CD4-positive, alpha-beta memory T cell (primary cell): ENCODE measurements at regions of chr1 and their contacts with region 1.

Region 1: GRCh38 chr1:39672551-39672947 is 642 bp upstream of the NT5C1A start:
- DNase-seq: peak in 2 of 5 donors; percentile 31 to 36
- H3K4me3 ChIP-seq: no peak overlapping the region
- H3K4me3 Mint-ChIP-seq: peak overlapping the region; percentile 57 to 78 (median 69)
- H3K27ac ChIP-seq: no peak overlapping the region
- H3K27ac Mint-ChIP-seq: peak overlapping the region in 1 of 7 donors; percentile 11
- H3K4me1 ChIP-seq: peaks cover 18% of the 10 kb centered on the region
- H3K4me1 Mint-ChIP-seq: peaks cover 0 to 7% (median 5%) of the 10 kb centered on the region in 4 donors
- H3K27me3 ChIP-seq: peaks cover 17% of the 10 kb centered on the region
- H3K27me3 Mint-ChIP-seq: peaks cover 14 to 16% of the 10 kb centered on the region in 2 donors

Region 2: GRCh38 chr1:39653546-39654031 is 19.0 kb before region 1 on chr1:
- CTCF ChIA-PET with region 1: interaction called, 103 read pairs
- POLR2A ChIA-PET with region 1: interaction called, 3 read pairs
- intact Hi-C with region 1: no loop called
- DNase-seq: peak; percentile 65 to 74 (median 71)
- H3K4me3 ChIP-seq: no peak overlapping the region
- H3K4me3 Mint-ChIP-seq: peak overlapping the region in 1 of 8 donors; percentile 3
- H3K27ac ChIP-seq: no peak overlapping the region
- H3K27ac Mint-ChIP-seq: no peak overlapping the region
- H3K4me1 ChIP-seq: peaks cover 5% of the 10 kb centered on the region
- H3K4me1 Mint-ChIP-seq: peaks cover 4 to 11% (median 8%) of the 10 kb centered on the region in 4 donors
- H3K27me3 ChIP-seq: no peaks in the 10 kb centered on the region
- H3K27me3 Mint-ChIP-seq: peaks cover 2 to 7% of the 10 kb centered on the region in 2 donors

Region 3: DNA sequence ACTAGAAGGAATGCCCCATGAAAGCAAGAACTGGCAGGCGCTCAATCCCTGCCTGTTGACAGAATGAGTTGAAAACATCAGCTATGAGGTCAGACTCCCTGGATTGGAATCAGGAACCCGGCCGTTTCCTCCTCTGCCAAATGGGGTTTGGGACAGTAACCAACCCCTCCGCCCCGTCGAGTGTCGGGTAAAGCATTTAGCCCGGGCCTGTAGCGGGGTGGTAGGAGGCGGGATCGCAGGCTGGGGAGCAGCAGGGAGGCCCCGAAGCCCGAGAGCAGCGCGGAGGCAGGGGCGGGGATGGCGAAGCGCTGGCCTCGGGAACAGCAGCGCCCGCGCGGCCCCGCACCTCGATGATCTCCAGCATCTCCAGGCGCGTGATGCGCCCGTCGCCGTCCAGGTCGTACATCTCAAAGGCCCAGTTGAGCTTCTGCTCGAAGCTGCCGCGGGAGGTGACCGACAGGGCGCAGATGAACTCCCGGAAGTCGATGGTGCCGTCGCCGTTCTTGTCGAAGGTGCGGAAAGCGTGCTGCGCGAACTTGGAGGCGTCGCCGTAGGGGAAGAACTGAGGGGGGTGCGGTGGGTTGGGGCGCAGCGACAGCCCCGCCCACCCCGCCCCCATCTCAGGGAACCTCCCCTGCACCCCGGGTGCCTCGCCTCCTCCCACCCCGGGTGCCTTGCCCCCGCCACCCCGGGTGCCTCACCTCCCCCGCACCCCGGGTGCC is 11.2 kb after region 1 on chr1:
- CTCF ChIA-PET with region 1: interaction called, 16 read pairs
- POLR2A ChIA-PET with region 1: interaction called, 14 read pairs
- intact Hi-C with region 1: no loop called
- DNase-seq: peak; percentile 46 to 73 (median 59)
- H3K4me3 ChIP-seq: peak overlapping the region in 1 of 2 donors; percentile 24
- H3K4me3 Mint-ChIP-seq: peak overlapping the region in 7 of 8 donors; percentile 26 to 77 (median 59)
- H3K27ac ChIP-seq: no peak overlapping the region
- H3K27ac Mint-ChIP-seq: peak overlapping the region in 6 of 7 donors; percentile 11 to 92 (median 70)
- H3K4me1 ChIP-seq: peaks cover 46% of the 10 kb centered on the region
- H3K4me1 Mint-ChIP-seq: peaks cover 18 to 44% (median 38%) of the 10 kb centered on the region in 4 donors
- H3K27me3 ChIP-seq: no peaks in the 10 kb centered on the region
- H3K27me3 Mint-ChIP-seq: peaks cover 0 to 2% of the 10 kb centered on the region in 2 donors

Region 4: DNA sequence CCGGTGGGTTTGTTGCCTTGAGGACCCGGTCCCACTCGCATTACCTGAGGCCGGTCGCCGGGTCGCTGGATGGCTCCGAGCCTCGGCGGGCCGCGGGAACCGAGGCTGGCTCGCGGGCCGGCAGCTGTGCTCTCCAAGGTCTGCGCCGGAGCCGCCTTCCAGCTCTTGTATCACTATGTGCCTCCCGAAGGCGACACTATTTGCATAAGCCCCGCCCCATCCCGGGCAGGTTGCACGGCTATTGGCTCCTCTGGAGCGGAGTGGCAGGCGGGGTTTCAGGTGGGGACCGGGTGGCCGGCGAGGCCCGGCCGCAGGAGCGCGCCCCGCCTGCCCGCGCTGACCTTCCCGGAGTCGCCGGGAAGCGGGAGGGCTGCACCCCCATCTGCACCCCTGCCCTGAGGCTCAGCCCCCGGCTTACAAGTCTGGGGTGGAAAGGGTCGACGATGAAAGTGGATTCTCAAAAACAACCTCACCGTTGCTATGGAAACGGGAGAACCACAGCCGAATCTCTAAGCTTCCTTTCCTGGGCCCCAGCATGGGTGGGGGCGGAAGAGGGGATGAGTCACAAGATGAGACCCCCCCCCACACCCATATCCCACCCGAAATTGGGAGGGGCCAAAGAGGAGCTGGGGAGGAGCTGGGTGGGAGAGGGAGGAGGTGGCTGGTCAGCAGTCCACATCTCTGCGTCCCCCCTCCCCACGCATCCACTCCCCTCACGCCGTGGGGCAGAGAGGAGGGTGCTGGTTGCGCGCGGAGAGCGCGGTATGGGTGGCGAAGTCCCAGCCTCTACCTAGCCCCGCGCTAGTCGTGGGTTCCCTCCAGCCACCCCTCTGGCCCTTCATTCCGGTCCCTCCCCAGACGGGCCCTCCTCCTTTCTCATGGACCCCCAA is 19.0 kb after region 1 on chr1 and contains the start of gene HPCAL4:
- CTCF ChIA-PET with region 1: interaction called, 16 read pairs
- POLR2A ChIA-PET with region 1: interaction called, 62 read pairs
- intact Hi-C with region 1: no loop called
- DNase-seq: peak; percentile 91 to 95 (median 93)
- H3K4me3 ChIP-seq: peak within 1 kb of the TSS; percentile 69 to 88
- H3K4me3 Mint-ChIP-seq: peak within 1 kb of the TSS; percentile 83 to 95 (median 87)
- H3K27ac ChIP-seq: peak within 1 kb of the TSS; percentile 65
- H3K27ac Mint-ChIP-seq: peak within 1 kb of the TSS; percentile 88 to 95 (median 92)
- H3K4me1 ChIP-seq: peaks cover 46% of the 10 kb centered on the region
- H3K4me1 Mint-ChIP-seq: peaks cover 19 to 48% (median 39%) of the 10 kb centered on the region in 4 donors
- H3K27me3 ChIP-seq: no peaks in the 10 kb centered on the region
- H3K27me3 Mint-ChIP-seq: no peaks in the 10 kb centered on the region
- total RNA-seq, gene HPCAL4: 31.8 to 32.4 TPM

Region 5: DNA sequence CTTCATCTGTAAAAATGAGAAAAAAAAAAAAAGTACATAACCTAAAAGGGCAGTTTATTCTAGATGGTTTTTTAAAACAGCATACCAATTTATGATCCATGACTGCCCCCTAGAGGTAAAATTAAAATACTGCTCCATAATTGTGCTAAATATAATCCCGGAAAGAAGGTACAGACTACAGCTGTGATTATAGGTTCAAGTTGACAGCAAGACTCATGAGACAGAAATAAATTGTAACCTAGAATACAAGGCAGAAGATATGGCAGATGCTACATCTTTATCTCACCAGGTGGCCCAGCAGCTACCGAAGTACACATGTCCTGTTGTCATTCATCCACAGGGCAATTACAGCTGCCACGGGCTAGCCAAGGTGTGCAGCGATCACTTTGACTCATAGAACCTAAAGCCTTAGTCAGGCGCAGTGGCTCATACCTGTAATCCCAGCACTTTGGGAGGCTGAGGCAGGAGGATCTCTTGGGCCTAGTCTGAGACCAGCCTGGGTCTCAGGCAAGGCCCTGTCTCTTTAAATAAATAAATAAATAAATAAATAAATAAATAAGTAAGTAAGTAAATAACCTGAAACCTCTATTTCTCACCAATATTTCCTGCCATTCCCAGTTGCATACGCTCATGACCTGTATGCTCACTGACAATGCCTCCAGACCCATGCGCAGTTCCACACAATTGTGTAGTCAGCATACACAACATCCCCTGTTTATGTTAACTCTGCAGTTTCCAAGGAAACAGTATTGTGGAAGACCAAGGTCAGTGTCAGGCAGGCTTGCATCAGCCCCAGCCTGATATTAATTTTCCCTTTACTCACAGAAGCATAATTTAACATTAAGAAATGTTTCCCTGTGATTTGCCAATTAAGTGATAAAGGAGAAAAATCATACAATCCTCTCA is 47.8 kb after region 1 on chr1:
- CTCF ChIA-PET with region 1: interaction called, 21 read pairs
- POLR2A ChIA-PET with region 1: interaction called, 6 read pairs
- intact Hi-C with region 1: loop called (anchors 1 kb)
- DNase-seq: peak in 4 of 5 donors; percentile 65 to 76 (median 72)
- H3K4me3 ChIP-seq: no peak overlapping the region
- H3K4me3 Mint-ChIP-seq: no peak overlapping the region
- H3K27ac ChIP-seq: no peak overlapping the region
- H3K27ac Mint-ChIP-seq: no peak overlapping the region
- H3K4me1 ChIP-seq: no peaks in the 10 kb centered on the region
- H3K4me1 Mint-ChIP-seq: peaks cover 0 to 3% (median under 1%) of the 10 kb centered on the region in 4 donors
- H3K27me3 ChIP-seq: peaks cover 5% of the 10 kb centered on the region
- H3K27me3 Mint-ChIP-seq: peaks cover 27 to 30% of the 10 kb centered on the region in 2 donors

Region 6: GRCh38 chr1:39738622-39739366 is 66.2 kb after region 1 on chr1 and contains the start of gene PPIE:
- CTCF ChIA-PET with region 1: interaction called, 3 read pairs
- POLR2A ChIA-PET with region 1: interaction called, 13 read pairs
- intact Hi-C with region 1: no loop called
- DNase-seq: peak; percentile 83 to 90 (median 85)
- H3K4me3 ChIP-seq: peak within 1 kb of the TSS; percentile 89 to 97
- H3K4me3 Mint-ChIP-seq: peak within 1 kb of the TSS; percentile 96 to 99 (median 98)
- H3K27ac ChIP-seq: peak within 1 kb of the TSS; percentile 65
- H3K27ac Mint-ChIP-seq: peak within 1 kb of the TSS; percentile 87 to 99 (median 98)
- H3K4me1 ChIP-seq: peaks cover 22% of the 10 kb centered on the region
- H3K4me1 Mint-ChIP-seq: peaks cover 20 to 41% (median 29%) of the 10 kb centered on the region in 4 donors
- H3K27me3 ChIP-seq: no peaks in the 10 kb centered on the region
- H3K27me3 Mint-ChIP-seq: peaks cover 6 to 20% of the 10 kb centered on the region in 2 donors
- total RNA-seq, gene PPIE: 67.7 to 69.4 TPM

Region 7: GRCh38 chr1:39829791-39830533 is 157.4 kb after region 1 on chr1:
- CTCF ChIA-PET with region 1: no interaction called
- POLR2A ChIA-PET with region 1: no interaction called
- intact Hi-C with region 1: no loop called
- DNase-seq: no peak
- H3K4me3 ChIP-seq: no peak overlapping the region
- H3K4me3 Mint-ChIP-seq: no peak overlapping the region
- H3K27ac ChIP-seq: no peak overlapping the region
- H3K27ac Mint-ChIP-seq: peak overlapping the region in 1 of 7 donors; percentile 13
- H3K4me1 ChIP-seq: no peaks in the 10 kb centered on the region
- H3K4me1 Mint-ChIP-seq: no peaks in the 10 kb centered on the region
- H3K27me3 ChIP-seq: no peaks in the 10 kb centered on the region
- H3K27me3 Mint-ChIP-seq: peaks cover 9 to 12% of the 10 kb centered on the region in 2 donors